ENCODE measurements at regions of chr22 and their contacts with region 1.

Region 1: GRCh38 chr22:23137905-23138561 is 3.8 kb downstream of the RSPH14 start:
- DNase-seq: peak in 1 of 4 experiments; percentile 71
- ATAC-seq: no peak
- H3K4me3 ChIP-seq: no peak overlapping the region
- H3K27ac ChIP-seq: no peak overlapping the region
- H3K4me1 ChIP-seq: peaks cover 11 to 14% of the 10 kb centered on the region in 2 experiments
- H3K27me3 ChIP-seq: peaks cover 33 to 38% of the 10 kb centered on the region in 2 experiments
- CTCF ChIP-seq: no peak
- EP300 ChIP-seq: no peak
- POLR2A ChIP-seq: no peak
- RAD21 ChIP-seq: no peak

Region 2: GRCh38 chr22:23113067-23113846 is 24.8 kb before region 1 on chr22:
- CTCF ChIA-PET with region 1: no interaction called
- POLR2A ChIA-PET with region 1: interaction called, 74 read pairs
- in situ Hi-C with region 1: no loop called
- intact Hi-C with region 1: loop called (anchors 2 kb)
- DNase-seq: peak in 3 of 4 experiments; percentile 52 to 63 (median 55)
- ATAC-seq: no peak
- H3K4me3 ChIP-seq: no peak overlapping the region
- H3K27ac ChIP-seq: no peak overlapping the region
- H3K4me1 ChIP-seq: peaks cover 0 to 20% of the 10 kb centered on the region in 2 experiments; a peak in 1 of 5 replicates
- H3K27me3 ChIP-seq: peaks cover 43 to 100% of the 10 kb centered on the region in 2 experiments; a peak in 4 of 5 replicates
- CTCF ChIP-seq: peak in 1 of 3 experiments; percentile 4; a peak in 1 of 6 replicates
- EP300 ChIP-seq: no peak
- POLR2A ChIP-seq: no peak
- RAD21 ChIP-seq: no peak

Region 3: GRCh38 chr22:23152315-23153113 is 14.5 kb after region 1 on chr22:
- CTCF ChIA-PET with region 1: no interaction called
- POLR2A ChIA-PET with region 1: interaction called, 33 read pairs
- in situ Hi-C with region 1: no loop called
- intact Hi-C with region 1: no loop called
- DNase-seq: peak in 1 of 4 experiments; percentile 62
- ATAC-seq: peak; percentile 2
- H3K4me3 ChIP-seq: no peak overlapping the region
- H3K27ac ChIP-seq: no peak overlapping the region
- H3K4me1 ChIP-seq: peaks cover 4 to 33% of the 10 kb centered on the region in 2 experiments; a peak in 4 of 5 replicates
- H3K27me3 ChIP-seq: peaks cover 80 to 94% of the 10 kb centered on the region in 2 experiments
- CTCF ChIP-seq: no peak
- EP300 ChIP-seq: no peak
- POLR2A ChIP-seq: no peak
- RAD21 ChIP-seq: no peak

Region 4: DNA sequence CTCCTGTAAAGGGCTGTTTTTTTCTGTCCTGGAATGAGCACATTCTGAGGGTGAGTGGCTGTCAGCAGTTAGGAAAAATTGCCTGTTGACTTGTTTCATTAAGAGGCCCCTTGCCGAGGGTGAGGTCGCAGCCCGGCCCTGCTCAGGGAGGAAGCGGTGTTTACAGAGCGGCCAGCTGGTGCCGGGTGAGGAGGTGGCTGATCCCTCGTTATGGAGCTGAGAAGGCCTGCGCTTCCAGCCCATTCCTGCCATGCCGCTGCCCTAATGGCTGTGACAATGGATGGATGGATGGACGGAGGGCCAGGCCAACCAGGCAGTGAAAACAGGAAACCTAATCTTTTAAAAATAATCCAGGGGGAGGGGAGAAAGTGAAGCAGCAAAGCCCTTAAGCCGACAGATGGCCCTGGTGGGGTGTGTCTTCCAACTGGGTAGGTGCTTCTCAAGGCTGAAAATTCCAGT is 80.8 kb after region 1 on chr22:
- CTCF ChIA-PET with region 1: no interaction called
- POLR2A ChIA-PET with region 1: no interaction called
- in situ Hi-C with region 1: no loop called
- intact Hi-C with region 1: no loop called
- DNase-seq: peak in 1 of 4 experiments; percentile 82
- ATAC-seq: peak; percentile 35
- H3K4me3 ChIP-seq: no peak overlapping the region
- H3K27ac ChIP-seq: peak overlapping the region; percentile 6; the same call in 2 of the 3 replicates
- H3K4me1 ChIP-seq: peaks cover 71 to 73% of the 10 kb centered on the region in 2 experiments
- H3K27me3 ChIP-seq: no peaks in the 10 kb centered on the region
- CTCF ChIP-seq: no peak
- EP300 ChIP-seq: no peak
- POLR2A ChIP-seq: no peak
- RAD21 ChIP-seq: no peak

Measured in K562 (cell line).